ENCODE measurements at regions of chrX and their contacts with region 1.

Region 1: DNA sequence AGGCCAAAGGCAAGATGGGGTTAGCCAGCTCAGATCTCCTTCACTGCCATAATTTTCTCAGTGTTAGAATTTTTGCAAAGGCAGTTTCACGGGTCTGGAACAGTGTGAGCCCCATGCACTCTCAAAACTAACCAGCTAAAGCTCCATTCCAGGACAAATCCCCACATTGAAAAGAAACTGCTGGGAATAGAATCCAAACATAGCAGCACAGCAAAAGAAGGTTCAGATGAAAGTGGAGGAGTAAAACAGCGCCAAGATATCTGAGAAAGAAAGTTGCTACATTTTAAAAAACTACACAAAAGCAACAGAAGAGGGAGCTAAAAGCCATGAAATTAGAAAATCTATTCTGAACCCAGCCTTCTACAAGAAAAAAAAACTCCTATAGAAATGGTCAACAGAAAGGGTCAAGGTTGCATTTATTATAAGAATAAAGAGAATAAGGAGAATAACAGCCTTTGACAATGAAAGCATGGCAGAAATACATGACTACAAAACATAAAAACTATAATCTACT is 39.6 kb upstream of the SLC7A3 start:
- DNase-seq: no peak
- ATAC-seq: no peak
- H3K4me3 Mint-ChIP-seq: no peak overlapping the region
- H3K27ac Mint-ChIP-seq: no peak overlapping the region
- H3K4me1 Mint-ChIP-seq: peaks cover 3% of the 10 kb centered on the region
- H3K27me3 Mint-ChIP-seq: no peaks in the 10 kb centered on the region

Region 2: DNA sequence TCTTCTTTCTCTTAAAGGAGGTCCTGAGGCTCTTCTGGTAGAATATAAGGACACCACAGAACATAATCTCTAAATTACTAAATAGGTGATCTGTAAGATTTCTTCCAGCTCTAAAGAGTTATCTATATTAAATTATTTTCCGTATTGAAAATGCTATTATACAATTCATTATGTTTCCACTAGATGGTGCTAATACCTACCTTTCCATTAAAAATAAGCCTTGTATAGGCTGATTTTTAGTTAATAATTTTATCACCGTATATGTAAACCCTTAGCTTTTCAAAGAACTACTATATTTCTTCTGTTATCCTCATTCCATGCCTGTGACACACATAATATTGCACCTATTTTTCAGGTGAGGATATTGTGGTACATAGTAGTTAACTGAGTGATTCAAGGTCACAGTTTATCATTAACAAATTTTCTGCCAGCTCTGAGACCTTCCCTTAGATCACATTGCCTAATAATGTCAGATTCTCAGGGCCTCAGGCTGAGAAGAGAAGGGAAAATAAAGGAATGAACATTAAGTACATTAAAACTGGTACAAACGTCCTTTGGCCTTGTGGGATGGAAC is 200.8 kb before region 1 on chrX:
- CTCF ChIA-PET with region 1: interaction called, 3 read pairs
- POLR2A ChIA-PET with region 1: no interaction called
- intact Hi-C with region 1: loop called in 1 of 2 experiments (anchors 10 kb)
- DNase-seq: no peak
- ATAC-seq: no peak
- H3K4me3 Mint-ChIP-seq: no peak overlapping the region
- H3K27ac Mint-ChIP-seq: no peak overlapping the region
- H3K4me1 Mint-ChIP-seq: no peaks in the 10 kb centered on the region
- H3K27me3 Mint-ChIP-seq: no peaks in the 10 kb centered on the region

Measured in activated CD4-positive, alpha-beta T cell treated with anti-CD3 and anti-CD28 coated beads for 36 hours (primary cell).